T-cell (primary cell): ENCODE measurements at regions of chr6 and their contacts with region 1.

Region 1: DNA sequence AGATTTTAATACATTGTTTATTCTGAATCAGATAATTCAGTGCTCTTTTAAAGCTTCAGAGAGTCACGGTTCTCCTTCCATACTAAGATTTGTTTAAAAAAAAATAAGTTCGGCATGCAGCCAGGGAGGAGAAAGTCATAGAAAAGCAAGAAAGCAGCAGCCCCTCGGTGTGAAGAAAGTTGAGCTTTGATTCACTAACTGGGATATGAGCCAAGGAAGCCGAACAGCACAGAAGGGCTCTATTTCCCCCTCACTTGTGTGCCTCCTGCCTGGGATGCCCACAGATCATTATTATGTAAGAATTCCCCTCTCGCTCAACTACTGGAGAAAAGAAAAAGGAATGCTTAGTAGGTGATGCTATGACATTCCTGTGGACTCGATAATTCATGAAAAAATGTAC is 69.3 kb upstream of the SYNJ2 start:
- DNase-seq: no peak
- ATAC-seq: no peak
- H3K4me3 ChIP-seq: no peak overlapping the region
- H3K4me3 Mint-ChIP-seq: no peak overlapping the region
- H3K27ac ChIP-seq: no peak overlapping the region
- H3K27ac Mint-ChIP-seq: peak overlapping the region in 1 of 2 donors; percentile 25
- H3K4me1 ChIP-seq: no peaks in the 10 kb centered on the region
- H3K4me1 Mint-ChIP-seq: peaks cover 3 to 10% (median 7%) of the 10 kb centered on the region in 3 donors
- H3K27me3 ChIP-seq: no peaks in the 10 kb centered on the region
- H3K27me3 Mint-ChIP-seq: no peaks in the 10 kb centered on the region

Region 2: GRCh38 chr6:156901309-156902019 is 1010.9 kb before region 1 on chr6:
- CTCF ChIA-PET with region 1: no interaction called
- POLR2A ChIA-PET with region 1: no interaction called
- DNase-seq: no peak
- ATAC-seq: no peak
- H3K4me3 ChIP-seq: no peak overlapping the region
- H3K4me3 Mint-ChIP-seq: no peak overlapping the region
- H3K27ac ChIP-seq: no peak overlapping the region
- H3K27ac Mint-ChIP-seq: peak overlapping the region in 1 of 2 donors; percentile 62
- H3K4me1 ChIP-seq: peaks cover 16% of the 10 kb centered on the region in 2 experiments
- H3K4me1 Mint-ChIP-seq: peaks cover 63 to 72% (median 69%) of the 10 kb centered on the region in 3 donors
- H3K27me3 ChIP-seq: no peaks in the 10 kb centered on the region
- H3K27me3 Mint-ChIP-seq: no peaks in the 10 kb centered on the region

Region 3: DNA sequence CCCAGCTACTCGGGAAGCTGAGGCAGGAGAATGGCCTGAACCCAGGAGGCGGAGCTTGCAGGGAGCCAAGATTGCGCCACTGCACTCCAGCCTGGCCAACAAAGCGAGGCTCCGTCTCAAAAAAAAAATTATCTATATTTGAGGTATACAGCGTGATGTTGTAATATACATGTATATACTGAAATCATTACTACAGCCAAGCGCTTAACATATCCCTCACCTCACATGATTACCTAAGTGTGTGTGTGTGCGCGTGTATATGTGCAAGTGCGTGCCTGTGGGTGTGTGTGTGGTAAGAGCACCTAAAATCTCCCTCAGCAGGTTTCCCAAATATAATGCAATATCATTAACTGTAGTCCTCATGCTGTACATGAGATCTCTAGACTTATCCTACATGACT is 12.7 kb before region 1 on chr6:
- CTCF ChIA-PET with region 1: no interaction called
- POLR2A ChIA-PET with region 1: no interaction called
- DNase-seq: no peak
- ATAC-seq: no peak
- H3K4me3 ChIP-seq: no peak overlapping the region
- H3K4me3 Mint-ChIP-seq: no peak overlapping the region
- H3K27ac ChIP-seq: no peak overlapping the region
- H3K27ac Mint-ChIP-seq: no peak overlapping the region
- H3K4me1 ChIP-seq: peaks cover 0 to 5% of the 10 kb centered on the region in 2 experiments
- H3K4me1 Mint-ChIP-seq: peaks cover 8% of the 10 kb centered on the region in 3 donors
- H3K27me3 ChIP-seq: no peaks in the 10 kb centered on the region
- H3K27me3 Mint-ChIP-seq: no peaks in the 10 kb centered on the region

Region 4: DNA sequence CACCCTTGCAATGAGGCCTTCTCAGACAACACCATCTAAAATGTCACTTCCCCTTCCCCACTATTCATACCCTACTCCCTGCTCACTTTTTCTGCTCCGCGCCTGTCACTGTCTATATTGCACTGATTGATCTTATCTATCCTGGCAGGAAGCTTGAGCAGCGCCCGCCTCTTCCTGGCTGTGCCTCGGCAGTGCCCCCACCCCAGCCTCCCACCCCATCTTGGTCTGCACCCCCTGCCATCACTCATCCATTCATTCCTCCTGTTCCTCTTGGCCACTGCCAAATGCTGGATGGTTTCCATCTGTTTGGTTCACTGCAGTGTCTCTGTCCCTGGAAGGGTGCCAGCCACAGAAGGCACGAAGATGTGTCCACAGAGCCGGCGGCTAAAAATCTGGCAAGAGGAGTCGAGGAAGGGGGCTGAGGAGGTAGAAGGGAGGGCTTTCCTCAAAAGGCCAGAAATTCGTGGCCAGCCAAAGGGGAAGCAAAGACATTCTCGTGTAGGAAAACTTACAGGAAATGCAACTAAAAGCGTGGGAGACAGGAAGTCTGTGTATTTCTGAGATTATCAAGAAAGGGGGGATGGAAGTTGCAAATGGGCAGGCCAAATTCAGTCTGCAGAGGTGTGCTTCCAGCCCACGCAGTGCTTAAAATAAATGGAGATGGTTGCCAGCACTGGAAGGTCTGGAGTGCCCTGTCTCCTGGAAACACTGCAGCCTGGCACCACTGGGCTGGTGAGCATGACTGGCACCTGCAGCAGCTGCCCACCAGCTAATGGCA is 97.0 kb after region 1 on chr6:
- CTCF ChIA-PET with region 1: no interaction called
- POLR2A ChIA-PET with region 1: interaction called in 1 of 2 experiments, 10 read pairs
- DNase-seq: peak in 19 of 35 experiments; percentile 11 to 41 (median 23)
- ATAC-seq: peak; percentile 73 to 84 (median 79)
- H3K4me3 ChIP-seq: peak overlapping the region; percentile 30 to 49
- H3K4me3 Mint-ChIP-seq: peak overlapping the region; percentile 70 to 85 (median 74)
- H3K27ac ChIP-seq: peak overlapping the region; percentile 57
- H3K27ac Mint-ChIP-seq: peak overlapping the region; percentile 91 to 95
- H3K4me1 ChIP-seq: peaks cover 45 to 60% of the 10 kb centered on the region in 2 experiments
- H3K4me1 Mint-ChIP-seq: peaks cover 78 to 95% (median 84%) of the 10 kb centered on the region in 3 donors
- H3K27me3 ChIP-seq: no peaks in the 10 kb centered on the region
- H3K27me3 Mint-ChIP-seq: no peaks in the 10 kb centered on the region